ENCODE measurements at regions of chr6 and their contacts with region 1.

Region 1: DNA sequence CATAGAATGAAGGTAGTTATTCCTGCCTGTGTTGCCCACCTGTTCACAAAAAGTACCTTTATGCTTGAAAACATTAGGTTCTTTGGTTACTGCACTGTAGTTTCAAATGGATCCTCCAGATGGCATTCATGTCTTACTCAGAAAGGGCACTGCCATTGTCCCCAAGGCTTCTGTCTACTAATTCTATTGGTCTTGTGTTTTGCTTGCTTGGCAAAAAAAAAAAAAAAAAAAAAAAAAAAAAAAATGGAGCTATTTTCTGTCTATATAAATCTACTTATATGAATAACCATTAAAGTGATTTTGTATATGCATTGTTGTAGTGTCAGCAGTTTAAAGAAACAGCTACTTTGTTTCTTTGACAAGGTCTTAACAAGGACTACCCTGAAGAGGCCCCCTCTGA is 12.7 kb upstream of the EFHC1 start:
- DNase-seq: peak; percentile 55
- H3K27ac ChIP-seq: no peak overlapping the region
- CTCF ChIP-seq: peak; percentile 62

Region 2: DNA sequence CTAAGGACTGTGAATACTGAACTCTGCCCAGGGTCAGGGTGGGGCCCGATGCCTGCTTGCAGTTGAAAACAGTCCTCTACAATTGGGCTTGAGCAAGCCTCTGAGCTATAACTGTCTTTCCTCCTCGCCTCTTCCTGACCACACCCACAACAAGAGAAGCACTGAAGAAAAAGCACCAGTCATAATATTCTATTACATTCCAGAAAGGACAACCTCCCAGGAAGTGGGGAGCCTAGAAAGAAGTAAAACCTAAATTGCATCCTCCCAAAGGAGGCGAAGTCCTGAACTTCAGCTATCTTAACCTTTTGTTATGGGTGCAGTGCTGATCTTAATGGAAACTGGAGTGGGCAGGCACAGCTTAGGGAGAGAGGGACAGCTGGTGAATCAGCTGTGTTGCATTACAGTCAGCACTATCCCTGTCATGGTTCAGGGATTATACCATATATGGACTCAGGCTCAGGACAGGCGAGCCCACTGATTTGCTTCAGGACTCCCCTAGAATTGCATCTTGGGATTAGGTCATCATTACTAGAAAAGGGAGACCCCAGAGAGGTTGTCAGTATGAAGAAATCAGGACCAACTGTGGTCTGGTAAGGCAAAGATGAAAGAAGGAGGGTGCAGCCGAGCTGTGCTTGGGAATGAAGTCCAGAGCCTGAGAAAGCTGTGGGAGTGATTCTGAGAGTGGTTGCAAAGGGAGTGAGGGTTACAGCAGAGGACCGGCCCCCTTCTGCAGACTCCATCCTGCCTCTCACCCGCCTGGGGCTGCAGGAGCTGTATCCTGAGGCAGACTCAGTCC is 187.7 kb after region 1 on chr6:
- CTCF ChIA-PET with region 1: interaction called, 14 read pairs
- POLR2A ChIA-PET with region 1: no interaction called
- DNase-seq: peak; percentile 42
- H3K27ac ChIP-seq: peak overlapping the region; percentile 54
- CTCF ChIP-seq: no peak

Region 3: DNA sequence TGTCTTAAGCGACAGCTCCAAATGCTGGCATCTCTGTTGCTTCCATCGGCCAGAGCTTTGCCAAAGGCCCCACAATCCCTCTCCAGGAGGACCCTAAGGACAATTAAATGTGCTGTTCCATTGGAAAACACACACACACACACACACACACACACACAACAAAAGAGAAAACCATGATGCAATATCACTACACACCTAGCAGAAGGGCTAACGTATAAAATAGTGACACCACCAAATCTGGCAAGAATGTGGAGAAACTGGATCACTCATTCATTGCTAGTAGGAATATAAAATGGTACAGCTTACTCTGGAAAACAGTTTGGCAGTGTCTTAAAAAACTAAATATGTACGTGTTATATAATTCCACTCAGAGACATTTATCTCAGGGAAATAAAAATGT is 250.4 kb after region 1 on chr6:
- CTCF ChIA-PET with region 1: interaction called, 15 read pairs
- POLR2A ChIA-PET with region 1: no interaction called
- DNase-seq: no peak
- H3K27ac ChIP-seq: no peak overlapping the region
- CTCF ChIP-seq: no peak

Region 4: GRCh38 chr6:52663120-52663935 is 255.9 kb after region 1 on chr6:
- CTCF ChIA-PET with region 1: interaction called, 15 read pairs
- POLR2A ChIA-PET with region 1: no interaction called
- DNase-seq: peak; percentile 64
- H3K27ac ChIP-seq: peak overlapping the region; percentile 76
- CTCF ChIP-seq: peak; percentile 81

Measured in RWPE1 (cell line).